Activated CD4-positive, alpha-beta memory T cell treated with anti-CD3 and anti-CD28 coated beads for 36 hours (primary cell): ENCODE measurements at regions of chr2 and their contacts with region 1.

Region 1: GRCh38 chr2:28387082-28387960 is 5.3 kb upstream of the FOSL2 start:
- DNase-seq: no peak
- H3K4me3 Mint-ChIP-seq: peak overlapping the region; percentile 16
- H3K27ac Mint-ChIP-seq: peak overlapping the region; percentile 85
- H3K4me1 Mint-ChIP-seq: peaks cover 34% of the 10 kb centered on the region
- H3K27me3 Mint-ChIP-seq: no peaks in the 10 kb centered on the region

Region 2: GRCh38 chr2:28338046-28338817 is 49.1 kb before region 1 on chr2:
- CTCF ChIA-PET with region 1: no interaction called
- POLR2A ChIA-PET with region 1: no interaction called
- intact Hi-C with region 1: no loop called
- DNase-seq: no peak
- H3K4me3 Mint-ChIP-seq: no peak overlapping the region
- H3K27ac Mint-ChIP-seq: no peak overlapping the region
- H3K4me1 Mint-ChIP-seq: no peaks in the 10 kb centered on the region
- H3K27me3 Mint-ChIP-seq: no peaks in the 10 kb centered on the region

Region 3: GRCh38 chr2:28366496-28367282 is 20.6 kb before region 1 on chr2:
- CTCF ChIA-PET with region 1: no interaction called
- POLR2A ChIA-PET with region 1: interaction called, 6 read pairs
- intact Hi-C with region 1: loop called (anchors 2 kb)
- DNase-seq: peak; percentile 72
- H3K4me3 Mint-ChIP-seq: peak overlapping the region; percentile 2
- H3K27ac Mint-ChIP-seq: peak overlapping the region; percentile 33
- H3K4me1 Mint-ChIP-seq: peaks cover 57% of the 10 kb centered on the region
- H3K27me3 Mint-ChIP-seq: no peaks in the 10 kb centered on the region

Region 4: GRCh38 chr2:28488858-28489575 is 101.7 kb after region 1 on chr2:
- CTCF ChIA-PET with region 1: no interaction called
- POLR2A ChIA-PET with region 1: no interaction called
- intact Hi-C with region 1: no loop called
- DNase-seq: no peak
- H3K4me3 Mint-ChIP-seq: no peak overlapping the region
- H3K27ac Mint-ChIP-seq: no peak overlapping the region
- H3K4me1 Mint-ChIP-seq: peaks cover 9% of the 10 kb centered on the region
- H3K27me3 Mint-ChIP-seq: no peaks in the 10 kb centered on the region